Astrocyte of the cerebellum (primary cell): ENCODE measurements at regions of chr18 and their contacts with region 1.

Region 1: DNA sequence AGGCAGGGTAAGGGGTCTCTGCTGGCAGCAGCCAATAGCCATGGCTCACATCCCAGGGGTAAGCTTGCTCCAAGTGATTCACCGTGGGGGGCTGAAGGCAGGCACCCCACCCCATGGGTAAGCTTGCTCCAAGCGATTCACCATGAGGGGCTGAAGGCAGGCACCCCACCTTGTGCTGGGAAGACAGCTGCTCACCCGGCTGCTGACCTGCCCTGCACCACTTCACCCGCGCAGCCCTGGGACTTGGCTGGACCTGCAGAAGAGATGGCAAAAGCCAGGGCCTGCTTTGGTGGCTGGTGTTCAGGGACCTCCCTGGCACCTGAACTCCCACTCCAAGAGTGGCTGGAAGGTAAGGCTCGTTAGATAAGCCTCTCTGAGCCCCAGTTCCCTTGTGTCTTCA is 19.2 kb downstream of the PTGR3 start:
- DNase-seq: no peak
- H3K4me3 ChIP-seq: no peak overlapping the region
- CTCF ChIP-seq: no peak

Region 2: DNA sequence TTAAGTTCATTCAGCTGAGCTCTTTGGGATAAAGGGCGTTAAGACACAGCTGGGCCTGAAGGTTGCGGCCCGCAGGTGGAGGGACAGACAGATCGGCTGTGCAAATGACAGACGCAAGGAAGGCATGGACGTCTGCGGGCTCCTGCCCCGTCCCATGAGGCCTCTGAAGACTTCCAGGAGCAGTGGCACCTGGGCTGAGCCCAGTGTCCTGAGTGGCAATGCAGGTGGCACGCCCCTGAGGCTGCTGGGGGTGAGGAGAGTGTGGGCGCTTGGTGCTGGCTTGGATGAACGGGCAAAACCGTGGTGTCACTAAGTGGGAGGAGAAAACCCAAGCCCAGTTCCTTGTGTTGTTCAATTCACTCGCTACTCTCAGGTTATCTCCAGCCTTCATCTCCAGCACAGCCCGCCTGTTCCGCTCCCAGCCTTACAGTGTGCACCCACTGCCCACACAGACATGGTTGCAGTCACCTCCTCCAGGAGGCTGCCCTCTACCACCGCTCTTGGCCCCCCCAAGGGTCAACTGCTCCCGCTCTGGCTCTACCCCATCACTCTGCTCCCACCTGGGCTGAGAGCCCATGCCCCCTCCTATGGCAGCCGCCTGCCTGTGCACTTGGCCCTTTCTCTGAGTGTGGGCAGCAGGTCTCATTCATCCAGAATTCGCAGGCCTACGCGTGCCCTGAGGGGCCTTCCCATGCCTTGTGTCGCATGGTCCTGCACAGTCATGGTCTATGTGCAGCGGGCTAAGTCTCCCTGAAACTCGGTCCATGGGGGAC is 31.0 kb before region 1 on chr18:
- in situ Hi-C with region 1: no loop called
- DNase-seq: no peak
- H3K4me3 ChIP-seq: no peak overlapping the region
- CTCF ChIP-seq: no peak

Region 3: GRCh38 chr18:75249672-75250470 is 60.2 kb after region 1 on chr18:
- in situ Hi-C with region 1: loop called (anchors 5 kb)
- DNase-seq: no peak
- H3K4me3 ChIP-seq: no peak overlapping the region
- CTCF ChIP-seq: no peak